ENCODE measurements at regions of chr10 and their contacts with region 1.

Region 1: GRCh38 chr10:71575451-71575850 is 144.1 kb downstream of the C10orf105 start:
- DNase-seq: peak; percentile 41 to 86 (median 67)
- H3K4me3 ChIP-seq: no peak overlapping the region
- H3K27ac ChIP-seq: peak overlapping the region in 1 of 2 donors; percentile 40
- H3K4me1 ChIP-seq: peaks cover 2% of the 10 kb centered on the region
- H3K27me3 ChIP-seq: no peaks in the 10 kb centered on the region
- CTCF ChIP-seq: no peak
- EP300 ChIP-seq: no peak
- POLR2A ChIP-seq: no peak

Region 2: DNA sequence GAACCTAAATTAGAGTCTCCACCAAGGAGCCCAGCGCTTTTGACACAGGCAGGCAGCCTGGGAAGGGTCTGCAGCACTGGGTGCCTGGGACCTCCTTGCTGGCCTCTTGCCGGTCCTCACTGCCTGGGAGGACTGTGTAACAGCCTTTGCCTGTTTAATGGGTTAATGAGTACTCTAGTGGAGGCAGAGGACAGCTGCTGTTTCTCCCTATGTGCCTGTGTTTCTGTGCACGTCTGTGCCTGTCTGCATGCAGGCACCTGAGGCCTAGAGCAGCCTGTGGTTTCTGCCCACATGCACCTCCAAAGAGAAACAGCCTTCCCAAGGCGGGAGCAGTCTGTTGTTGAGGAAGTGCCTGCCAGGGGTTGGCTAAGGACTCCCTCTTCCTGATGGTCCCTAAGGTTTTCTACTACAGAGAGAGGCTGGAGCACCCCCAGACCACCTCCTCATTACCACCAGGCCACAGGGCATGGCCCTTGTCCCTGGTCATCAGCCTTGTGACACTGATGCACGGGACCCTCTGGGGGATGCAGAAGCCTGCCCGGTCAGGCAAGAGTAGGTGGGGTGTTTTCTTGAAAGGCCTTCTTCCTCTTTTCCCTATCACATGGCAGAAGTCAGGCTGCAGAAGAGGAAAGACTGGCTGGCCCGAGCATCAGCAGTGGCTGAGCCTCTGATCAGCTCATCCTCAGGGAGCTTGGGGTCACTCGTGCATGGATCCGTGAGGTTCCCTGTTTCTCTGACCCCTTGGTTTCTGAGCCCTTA is 242.1 kb before region 1 on chr10:
- intact Hi-C with region 1: loop called in 2 of 4 experiments (anchors 5 to 10 kb)
- DNase-seq: no peak
- H3K4me3 ChIP-seq: no peak overlapping the region
- H3K27ac ChIP-seq: peak overlapping the region in 1 of 2 donors; percentile 39
- H3K4me1 ChIP-seq: peaks cover 13% of the 10 kb centered on the region
- H3K27me3 ChIP-seq: no peaks in the 10 kb centered on the region
- CTCF ChIP-seq: no peak
- EP300 ChIP-seq: no peak
- POLR2A ChIP-seq: no peak

Region 3: DNA sequence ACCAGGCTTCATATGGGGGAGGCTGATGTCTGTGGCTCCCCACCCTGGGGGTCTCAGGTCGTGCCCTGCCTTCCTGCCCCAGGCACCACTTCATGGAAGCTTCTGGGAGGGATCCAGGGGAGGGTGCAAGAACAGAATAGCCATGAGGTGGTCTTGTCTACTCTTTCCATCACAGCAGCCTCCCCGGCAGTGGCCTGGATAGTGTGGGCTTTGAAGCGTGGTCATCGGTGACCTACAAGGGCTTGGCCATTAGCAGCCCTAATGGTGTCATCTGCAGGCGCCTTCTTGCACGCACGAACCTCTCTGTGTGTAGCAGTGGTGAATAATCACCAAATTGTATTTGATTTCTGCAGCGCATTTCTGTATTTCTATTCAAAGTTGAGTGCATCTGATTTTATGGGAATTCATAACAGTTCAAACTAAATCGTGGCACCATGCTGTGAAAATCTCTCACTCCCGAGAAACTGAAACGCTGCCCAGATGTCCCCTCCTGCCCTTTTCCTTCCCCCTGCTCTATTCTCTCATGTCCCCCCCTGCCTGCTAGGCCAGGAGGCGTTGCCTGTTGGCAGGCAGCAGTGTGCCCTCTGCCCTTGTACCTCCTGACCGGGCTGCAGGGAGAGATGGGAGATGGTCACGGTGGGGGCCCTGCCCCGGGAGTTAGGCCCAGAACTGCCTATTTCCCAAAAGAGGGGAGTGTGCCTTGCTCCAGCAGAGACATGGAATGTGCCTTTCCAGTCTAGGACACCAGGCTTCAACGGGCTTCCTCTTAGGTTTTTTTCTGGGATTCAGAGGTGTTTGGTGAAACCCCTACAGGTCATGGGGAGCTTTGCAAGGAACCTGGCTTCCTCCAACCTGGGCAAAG is 144.0 kb before region 1 on chr10:
- intact Hi-C with region 1: no loop called
- DNase-seq: peak; percentile 60 to 83 (median 80)
- H3K4me3 ChIP-seq: no peak overlapping the region
- H3K27ac ChIP-seq: no peak overlapping the region
- H3K4me1 ChIP-seq: peaks cover 17% of the 10 kb centered on the region
- H3K27me3 ChIP-seq: no peaks in the 10 kb centered on the region
- CTCF ChIP-seq: no peak
- EP300 ChIP-seq: no peak
- POLR2A ChIP-seq: no peak

Region 4: GRCh38 chr10:71608819-71609768 is 33.6 kb after region 1 on chr10:
- intact Hi-C with region 1: loop called in 1 of 4 experiments (anchors 5 kb)
- DNase-seq: peak; percentile 84 to 92 (median 91)
- H3K4me3 ChIP-seq: no peak overlapping the region
- H3K27ac ChIP-seq: no peak overlapping the region
- H3K4me1 ChIP-seq: no peaks in the 10 kb centered on the region
- H3K27me3 ChIP-seq: no peaks in the 10 kb centered on the region
- CTCF ChIP-seq: peak; percentile 65 to 74 (median 70)
- EP300 ChIP-seq: no peak
- POLR2A ChIP-seq: no peak

Region 5: DNA sequence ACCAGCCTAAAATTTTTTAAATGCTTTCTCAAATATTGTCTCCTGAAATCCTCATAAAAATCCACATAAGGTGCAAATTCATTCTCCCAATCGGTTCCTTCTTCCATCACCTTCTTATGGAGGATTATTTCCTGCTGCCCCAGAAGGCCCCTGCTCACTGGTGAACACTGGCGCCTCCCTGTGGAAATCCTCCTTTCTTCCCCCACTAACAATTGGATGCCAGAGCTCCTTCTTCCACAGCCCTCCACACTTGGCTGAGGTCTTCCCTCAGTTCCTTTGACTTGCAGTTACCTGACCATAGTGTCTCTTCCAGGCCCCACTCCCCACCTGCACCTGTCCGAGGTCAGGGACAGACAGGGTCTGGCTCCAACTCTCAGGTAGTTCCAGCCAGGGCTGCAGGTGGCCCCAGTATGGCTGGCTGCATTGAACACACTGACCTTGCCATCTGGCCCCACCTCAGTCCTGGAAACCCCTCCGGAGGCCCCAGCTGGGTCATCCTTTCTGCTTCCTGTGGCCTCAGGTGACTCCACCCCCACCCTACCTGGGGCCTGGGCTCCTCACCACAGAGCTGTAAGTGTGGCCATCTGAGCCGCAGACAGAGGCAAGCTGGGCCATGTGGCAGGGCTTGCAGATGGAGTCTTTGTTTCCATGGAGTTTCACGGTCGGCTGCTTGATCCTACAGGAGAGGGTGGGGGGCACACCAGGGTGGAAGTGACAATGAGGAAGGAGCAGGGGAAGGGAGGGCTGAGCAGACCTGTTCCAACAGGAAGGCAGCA is 494.5 kb after region 1 on chr10:
- intact Hi-C with region 1: no loop called
- DNase-seq: no peak
- H3K4me3 ChIP-seq: no peak overlapping the region
- H3K27ac ChIP-seq: no peak overlapping the region
- H3K4me1 ChIP-seq: peaks cover 23% of the 10 kb centered on the region
- H3K27me3 ChIP-seq: no peaks in the 10 kb centered on the region
- CTCF ChIP-seq: no peak
- EP300 ChIP-seq: no peak
- POLR2A ChIP-seq: no peak